Posterior cingulate gyrus (tissue), 11 donors: ENCODE measurements at regions of chr4 and their contacts with region 1.

Region 1: GRCh38 chr4:161949946-161950725 is 213.7 kb downstream of the FSTL5 start:
- DNase-seq: peak in 1 of 10 donors; percentile 36

Region 2: GRCh38 chr4:161256716-161257115 is 693.4 kb before region 1 on chr4:
- intact Hi-C with region 1: loop called (anchors 5 kb)
- DNase-seq: no peak

Region 3: GRCh38 chr4:161564230-161564834 is 385.8 kb before region 1 on chr4:
- intact Hi-C with region 1: loop called (anchors 10 kb)
- DNase-seq: no peak

Region 4: DNA sequence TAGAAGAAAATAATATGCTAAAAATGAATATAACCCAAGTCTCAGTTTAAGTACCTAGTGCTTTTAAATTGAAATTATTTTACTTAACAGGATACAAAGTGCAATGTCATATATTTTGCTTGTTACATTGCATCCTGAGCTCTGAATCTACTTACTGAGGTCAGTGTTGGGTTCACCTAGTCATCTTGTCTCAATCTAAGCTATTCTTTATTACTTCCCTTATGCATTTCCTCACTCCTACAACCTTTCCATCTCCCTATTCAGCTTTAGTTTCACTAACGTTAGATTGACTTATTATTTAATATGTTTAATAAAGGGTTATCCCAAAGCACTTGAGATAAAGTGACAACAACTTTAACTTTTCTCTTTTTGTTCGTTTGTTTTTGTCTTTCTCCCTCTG is 270.0 kb before region 1 on chr4:
- intact Hi-C with region 1: no loop called
- DNase-seq: no peak